CD8-positive, alpha-beta T cell (primary cell): ENCODE measurements at regions of chr11 and their contacts with region 1.

Region 1: GRCh38 chr11:72040726-72041441 is 39.5 kb downstream of the NUMA1 start:
- DNase-seq: peak; percentile 52 to 92 (median 85)
- ATAC-seq: peak; percentile 77
- H3K4me3 ChIP-seq: peak overlapping the region; percentile 80 to 82
- H3K4me3 Mint-ChIP-seq: no peak overlapping the region
- H3K27ac ChIP-seq: peak overlapping the region; percentile 93 to 96
- H3K27ac Mint-ChIP-seq: no peak overlapping the region
- H3K4me1 ChIP-seq: peaks cover 72% of the 10 kb centered on the region
- H3K4me1 Mint-ChIP-seq: peaks cover 40% of the 10 kb centered on the region
- H3K27me3 ChIP-seq: no peaks in the 10 kb centered on the region
- H3K27me3 Mint-ChIP-seq: no peaks in the 10 kb centered on the region
- CTCF ChIP-seq: no peak

Region 2: DNA sequence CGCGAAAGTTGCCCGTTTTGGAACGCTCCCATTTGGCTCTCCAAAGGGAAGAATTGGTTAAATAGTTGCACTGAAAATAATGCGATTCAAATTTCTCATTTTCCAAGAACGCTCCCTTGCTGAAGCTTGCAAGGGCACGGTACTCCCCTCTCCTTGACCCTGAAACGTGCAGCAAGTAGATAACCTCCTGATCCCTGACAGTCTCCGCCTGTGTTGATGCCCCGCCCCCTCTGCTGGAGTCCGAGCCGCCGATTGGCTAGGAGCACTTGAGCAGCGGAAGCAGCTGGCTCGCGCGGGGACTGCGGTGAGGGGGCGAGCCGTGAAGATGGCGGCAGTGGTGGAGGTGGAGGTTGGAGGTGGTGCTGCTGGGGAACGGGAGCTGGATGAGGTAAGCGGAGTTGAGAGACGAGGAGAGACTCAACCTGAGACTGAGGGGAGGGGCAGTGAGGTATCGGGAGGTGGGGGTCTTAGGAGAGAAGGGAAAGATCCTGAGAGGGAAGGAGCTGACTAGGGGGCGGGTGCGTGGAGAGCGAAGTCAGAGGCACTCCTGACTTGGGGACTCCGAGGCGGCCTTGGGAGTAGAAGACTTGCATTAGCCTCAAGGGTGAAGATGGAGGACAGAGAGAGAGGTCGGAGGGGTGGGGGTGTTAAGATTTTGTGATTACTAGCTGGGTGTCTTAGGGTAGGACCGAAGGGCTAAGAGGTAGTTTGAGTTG is 112.0 kb before region 1 on chr11 and contains the start of gene RNF121:
- CTCF ChIA-PET with region 1: no interaction called
- POLR2A ChIA-PET with region 1: interaction called, 3 read pairs
- intact Hi-C with region 1: loop called in 1 of 2 experiments (anchors 2 kb)
- DNase-seq: peak; percentile 94 to 99 (median 97)
- ATAC-seq: peak; percentile 86
- H3K4me3 ChIP-seq: peak within 1 kb of the TSS; percentile 67 to 98
- H3K4me3 Mint-ChIP-seq: peak within 1 kb of the TSS; percentile 100
- H3K27ac ChIP-seq: peak within 1 kb of the TSS; percentile 90 to 96
- H3K27ac Mint-ChIP-seq: peak within 1 kb of the TSS; percentile 99
- H3K4me1 ChIP-seq: peaks cover 22% of the 10 kb centered on the region
- H3K4me1 Mint-ChIP-seq: peaks cover 57% of the 10 kb centered on the region
- H3K27me3 ChIP-seq: no peaks in the 10 kb centered on the region
- H3K27me3 Mint-ChIP-seq: no peaks in the 10 kb centered on the region
- CTCF ChIP-seq: no peak
- total RNA-seq, gene RNF121: 8.5 to 9.0 TPM

Region 3: GRCh38 chr11:72030472-72031045 is 10.3 kb before region 1 on chr11:
- CTCF ChIA-PET with region 1: interaction called, 58 read pairs
- POLR2A ChIA-PET with region 1: interaction called, 27 read pairs
- intact Hi-C with region 1: loop called in 1 of 2 experiments (anchors 2 kb)
- DNase-seq: no peak
- ATAC-seq: no peak
- H3K4me3 ChIP-seq: no peak overlapping the region
- H3K4me3 Mint-ChIP-seq: no peak overlapping the region
- H3K27ac ChIP-seq: peak overlapping the region in 1 of 2 experiments; percentile 0
- H3K27ac Mint-ChIP-seq: peak overlapping the region; percentile 64
- H3K4me1 ChIP-seq: peaks cover 38% of the 10 kb centered on the region
- H3K4me1 Mint-ChIP-seq: peaks cover 71% of the 10 kb centered on the region
- H3K27me3 ChIP-seq: no peaks in the 10 kb centered on the region
- H3K27me3 Mint-ChIP-seq: no peaks in the 10 kb centered on the region
- CTCF ChIP-seq: no peak

Region 4: DNA sequence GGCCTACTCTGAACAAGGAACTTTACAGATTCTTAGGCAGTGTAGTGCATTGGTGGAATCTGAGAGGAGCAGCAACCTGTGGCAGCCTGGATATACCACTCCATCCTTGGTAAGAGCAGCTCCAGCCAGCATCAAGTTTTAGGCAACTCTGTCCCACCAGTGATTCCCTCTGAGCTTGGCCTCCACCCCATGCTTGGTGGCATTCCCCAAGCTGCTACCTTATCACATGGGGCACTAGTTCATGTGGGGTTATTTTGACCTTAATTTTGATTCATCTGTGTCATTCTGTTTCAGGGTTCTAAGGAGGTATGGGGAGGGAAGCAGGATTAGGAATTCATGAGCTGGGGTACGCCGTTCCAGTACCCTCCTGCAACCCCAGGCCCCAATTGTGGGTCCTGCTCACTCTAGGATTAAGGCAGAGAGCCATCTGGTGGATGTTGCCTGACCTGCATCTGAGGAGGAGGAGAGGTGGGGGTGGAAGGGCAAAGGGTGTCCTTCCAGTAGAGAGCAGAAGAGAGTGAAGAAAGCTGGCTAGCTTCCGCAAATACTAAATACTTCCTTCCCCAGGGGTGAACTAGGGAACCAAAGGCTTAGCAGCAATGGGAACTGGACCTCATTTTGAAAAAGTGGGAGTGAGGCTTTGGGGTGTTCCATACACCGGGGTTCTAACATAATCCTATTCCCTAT is 50.3 kb after region 1 on chr11:
- CTCF ChIA-PET with region 1: interaction called, 55 read pairs
- POLR2A ChIA-PET with region 1: interaction called, 15 read pairs
- intact Hi-C with region 1: no loop called
- DNase-seq: peak; percentile 50 to 80 (median 73)
- ATAC-seq: peak; percentile 99
- H3K4me3 ChIP-seq: no peak overlapping the region
- H3K4me3 Mint-ChIP-seq: no peak overlapping the region
- H3K27ac ChIP-seq: no peak overlapping the region
- H3K27ac Mint-ChIP-seq: peak overlapping the region; percentile 70
- H3K4me1 ChIP-seq: no peaks in the 10 kb centered on the region
- H3K4me1 Mint-ChIP-seq: peaks cover 12% of the 10 kb centered on the region
- H3K27me3 ChIP-seq: no peaks in the 10 kb centered on the region
- H3K27me3 Mint-ChIP-seq: no peaks in the 10 kb centered on the region
- CTCF ChIP-seq: peak; percentile 74

Region 5: GRCh38 chr11:72112321-72113219 is 71.7 kb after region 1 on chr11 and contains the start of gene ANAPC15:
- CTCF ChIA-PET with region 1: no interaction called
- POLR2A ChIA-PET with region 1: interaction called, 17 read pairs
- intact Hi-C with region 1: loop called (anchors 1 kb)
- DNase-seq: peak; percentile 95 to 100 (median 98)
- ATAC-seq: peak; percentile 85
- H3K4me3 ChIP-seq: peak within 1 kb of the TSS; percentile 63 to 65
- H3K4me3 Mint-ChIP-seq: peak within 1 kb of the TSS; percentile 96
- H3K27ac ChIP-seq: peak within 1 kb of the TSS; percentile 88 to 94
- H3K27ac Mint-ChIP-seq: peak within 1 kb of the TSS; percentile 99
- H3K4me1 ChIP-seq: peaks cover 16% of the 10 kb centered on the region
- H3K4me1 Mint-ChIP-seq: peaks cover 23% of the 10 kb centered on the region
- H3K27me3 ChIP-seq: no peaks in the 10 kb centered on the region
- H3K27me3 Mint-ChIP-seq: peaks cover 4% of the 10 kb centered on the region
- CTCF ChIP-seq: no peak
- total RNA-seq, gene ANAPC15: 42.1 to 46.2 TPM